ENCODE measurements at regions of chr2 and their contacts with region 1.

Region 1: DNA sequence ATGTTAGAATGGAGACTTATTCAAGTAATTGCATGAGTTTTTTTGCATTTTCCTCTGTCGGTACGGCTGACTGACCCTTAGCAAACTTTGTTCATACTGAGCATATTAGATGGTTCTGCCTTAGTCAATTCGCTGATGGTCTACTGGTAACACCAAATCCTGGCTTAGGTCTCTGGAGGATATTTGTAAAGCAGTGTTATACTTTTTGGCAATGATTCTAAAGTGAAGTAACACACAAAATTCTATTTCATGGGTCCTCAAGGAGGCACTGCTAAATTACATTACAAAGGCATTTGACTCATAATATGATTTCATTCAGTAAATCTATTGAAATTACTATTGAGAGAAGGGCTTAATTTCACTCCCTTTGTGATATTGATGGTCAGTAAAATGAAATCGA is 246.8 kb upstream of the RASGRP3 start:
- DNase-seq: peak; percentile 33
- ATAC-seq: peak; percentile 8; the same call in 1 of the 2 replicates
- H3K4me3 ChIP-seq: no peak overlapping the region
- H3K27ac ChIP-seq: peak overlapping the region; percentile 93
- H3K4me1 ChIP-seq: peaks cover 38% of the 10 kb centered on the region
- H3K27me3 ChIP-seq: no peaks in the 10 kb centered on the region
- CTCF ChIP-seq: peak; percentile 25; the same call in 1 of the 2 replicates

Region 2: GRCh38 chr2:32969444-32970162 is 260.0 kb before region 1 on chr2:
- CTCF ChIA-PET with region 1: no interaction called
- POLR2A ChIA-PET with region 1: no interaction called
- intact Hi-C with region 1: no loop called
- DNase-seq: no peak
- ATAC-seq: no peak
- H3K4me3 ChIP-seq: no peak overlapping the region
- H3K27ac ChIP-seq: no peak overlapping the region
- H3K4me1 ChIP-seq: no peaks in the 10 kb centered on the region
- H3K27me3 ChIP-seq: no peaks in the 10 kb centered on the region
- CTCF ChIP-seq: no peak

Region 3: GRCh38 chr2:33158482-33159003 is 71.1 kb before region 1 on chr2:
- CTCF ChIA-PET with region 1: no interaction called
- POLR2A ChIA-PET with region 1: no interaction called
- intact Hi-C with region 1: loop called (anchors 2 kb)
- DNase-seq: peak; percentile 90
- ATAC-seq: peak; percentile 87
- H3K4me3 ChIP-seq: peak overlapping the region; percentile 24; the same call in 1 of the 2 replicates
- H3K27ac ChIP-seq: peak overlapping the region; percentile 89
- H3K4me1 ChIP-seq: peaks cover 26% of the 10 kb centered on the region
- H3K27me3 ChIP-seq: no peaks in the 10 kb centered on the region
- CTCF ChIP-seq: no peak

Measured in PC-3 (cell line).